ENCODE measurements at regions of chr17 and their contacts with region 1.

Region 1: DNA sequence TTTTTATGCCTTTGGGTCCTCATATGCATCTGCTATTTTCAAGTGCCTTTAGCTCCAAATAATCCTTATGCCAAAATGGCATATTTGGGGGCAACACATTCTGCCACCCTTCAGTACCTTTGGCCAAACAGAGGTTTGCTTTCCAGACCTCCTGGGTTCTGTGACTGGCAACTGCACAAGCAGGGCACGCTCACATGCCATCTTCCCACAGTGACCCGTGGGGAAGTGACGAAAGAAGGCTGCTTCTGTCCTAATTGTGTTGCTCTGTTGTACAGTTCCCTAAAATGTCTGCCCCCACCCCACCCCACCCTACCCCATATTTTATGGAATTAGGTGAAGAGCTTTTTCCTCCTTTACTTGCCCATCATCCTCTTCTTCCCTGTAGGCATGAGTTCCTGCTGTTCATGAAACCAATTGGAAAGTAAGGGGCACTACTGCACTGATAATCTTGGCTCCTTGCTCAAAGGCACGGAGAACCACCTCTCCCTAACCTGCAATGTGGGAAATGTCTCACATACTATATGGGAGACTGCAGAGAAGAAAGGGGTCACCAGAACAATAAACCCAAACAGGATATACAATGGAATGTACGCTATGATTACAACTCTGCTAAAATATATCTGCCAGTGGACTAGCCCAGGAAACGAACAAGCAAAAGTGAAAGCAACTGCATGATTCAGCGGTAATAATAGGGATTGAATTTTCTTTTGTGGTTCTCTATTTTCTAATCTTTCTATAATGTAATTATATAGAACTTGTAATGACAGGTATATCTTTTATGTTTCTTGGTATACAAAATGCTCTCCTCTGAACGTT is 3.3 kb upstream of the SLFN12L start:
- DNase-seq: peak; percentile 51
- ATAC-seq: peak; percentile 78
- H3K4me3 ChIP-seq: peak overlapping the region; percentile 41; the same call in 1 of the 2 replicates
- H3K27ac ChIP-seq: peak overlapping the region; percentile 82; the same call in 1 of the 2 replicates
- H3K4me1 ChIP-seq: no peaks in the 10 kb centered on the region
- H3K27me3 ChIP-seq: no peaks in the 10 kb centered on the region; the same call in 1 of the 2 replicates
- CTCF ChIP-seq: no peak
- POLR2A ChIP-seq: no peak
- RAD21 ChIP-seq: no peak

Region 2: DNA sequence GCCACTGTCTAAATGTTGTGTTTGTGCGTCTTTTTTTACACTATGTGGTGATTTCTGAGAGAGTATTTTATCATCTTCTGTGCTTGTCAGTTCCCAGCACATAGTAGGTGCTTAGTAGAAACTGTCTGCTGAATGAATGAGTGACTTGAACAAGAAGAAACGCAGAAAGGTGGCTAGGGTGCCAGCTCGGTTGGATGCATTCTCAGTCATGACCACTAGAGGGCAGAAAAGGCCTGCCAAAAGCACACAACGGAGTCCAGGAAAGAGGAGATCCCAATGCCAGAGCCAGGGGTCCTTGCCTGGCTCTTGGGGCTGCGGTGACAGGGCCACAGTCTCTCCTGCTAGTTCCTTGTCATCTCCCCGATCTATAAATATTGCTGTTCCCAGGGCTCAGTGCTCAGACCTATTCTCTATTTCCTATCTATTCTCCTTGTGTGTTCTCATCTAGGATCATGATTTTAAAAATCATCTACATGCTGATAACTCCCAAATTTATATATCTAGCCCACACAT is 1120.5 kb before region 1 on chr17:
- CTCF ChIA-PET with region 1: no interaction called
- POLR2A ChIA-PET with region 1: no interaction called
- dilution Hi-C with region 1: no loop called
- in situ Hi-C with region 1: loop called (anchors 25 kb)
- intact Hi-C with region 1: loop called (anchors 2 kb)
- DNase-seq: peak; percentile 46
- ATAC-seq: peak; percentile 95
- H3K4me3 ChIP-seq: no peak overlapping the region
- H3K27ac ChIP-seq: no peak overlapping the region
- H3K4me1 ChIP-seq: no peaks in the 10 kb centered on the region
- H3K27me3 ChIP-seq: peaks cover 27% of the 10 kb centered on the region
- CTCF ChIP-seq: peak; percentile 85
- POLR2A ChIP-seq: no peak
- RAD21 ChIP-seq: peak; percentile 91

Region 3: DNA sequence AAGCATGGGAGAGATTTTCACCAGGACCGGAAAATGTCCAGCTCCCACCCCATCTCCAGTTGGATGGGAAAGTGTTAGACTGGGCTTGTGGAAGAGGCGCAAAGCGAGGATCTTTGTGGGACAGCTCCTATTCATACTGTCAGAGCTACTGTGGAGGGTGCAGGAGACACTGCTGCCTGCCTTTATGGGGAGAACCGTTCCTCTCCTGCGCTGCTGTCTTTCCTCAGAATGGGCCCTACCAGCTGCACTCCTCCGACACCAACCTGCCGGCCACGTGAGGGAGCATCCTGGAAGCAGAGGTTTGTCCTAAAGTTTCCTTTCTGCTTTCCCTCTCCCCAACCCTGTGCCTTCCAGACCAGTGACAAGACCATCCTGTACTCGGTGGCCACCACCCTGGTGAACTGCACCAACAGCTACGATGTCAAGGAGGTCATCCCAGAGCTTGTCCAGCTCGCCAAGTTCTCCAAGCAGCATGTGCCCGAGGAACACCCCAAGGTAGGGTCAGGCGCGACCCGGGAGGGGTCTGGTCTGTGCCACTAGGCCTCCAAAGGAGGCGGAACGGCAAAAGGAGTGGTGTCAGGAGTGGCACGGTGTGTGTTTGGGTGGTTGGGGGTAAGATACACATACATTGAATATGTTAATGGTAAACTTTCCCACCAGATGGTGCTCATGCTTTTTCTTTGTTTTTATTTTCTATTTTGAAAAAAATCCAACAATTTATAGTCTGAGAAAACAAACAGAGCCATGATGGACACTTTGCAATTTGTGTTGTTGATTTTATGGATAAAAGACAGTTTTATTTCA is 369.6 kb before region 1 on chr17:
- CTCF ChIA-PET with region 1: interaction called, 3 read pairs
- POLR2A ChIA-PET with region 1: no interaction called
- dilution Hi-C with region 1: loop called (anchors 25 kb)
- in situ Hi-C with region 1: loop called (anchors 5 kb)
- intact Hi-C with region 1: loop called (anchors 1 kb)
- DNase-seq: peak; percentile 15
- ATAC-seq: peak; percentile 49
- H3K4me3 ChIP-seq: no peak overlapping the region
- H3K27ac ChIP-seq: no peak overlapping the region
- H3K4me1 ChIP-seq: peaks cover 4% of the 10 kb centered on the region; the same call in 1 of the 2 replicates
- H3K27me3 ChIP-seq: peaks cover 3% of the 10 kb centered on the region; the same call in 1 of the 2 replicates
- CTCF ChIP-seq: peak; percentile 50
- POLR2A ChIP-seq: no peak
- RAD21 ChIP-seq: peak; percentile 51

Region 4: GRCh38 chr17:35242805-35243560 is 297.8 kb before region 1 on chr17 and contains the start of gene SLFN5:
- CTCF ChIA-PET with region 1: no interaction called
- POLR2A ChIA-PET with region 1: interaction called, 5 read pairs
- dilution Hi-C with region 1: no loop called
- in situ Hi-C with region 1: no loop called
- intact Hi-C with region 1: loop called (anchors 2 kb)
- DNase-seq: peak; percentile 90
- ATAC-seq: peak; percentile 79
- H3K4me3 ChIP-seq: peak within 1 kb of the TSS; percentile 59
- H3K27ac ChIP-seq: peak within 1 kb of the TSS; percentile 85
- H3K4me1 ChIP-seq: peaks cover 5% of the 10 kb centered on the region
- H3K27me3 ChIP-seq: no peaks in the 10 kb centered on the region
- CTCF ChIP-seq: no peak
- POLR2A ChIP-seq: peak; percentile 99
- RAD21 ChIP-seq: 0 out of 2 replicates have a peak, but pooled peaks have one; percentile 5
- total RNA-seq, gene SLFN5: 48.9 and 64.2 TPM in 2 replicates

Region 5: GRCh38 chr17:35432176-35433074 is 108.4 kb before region 1 on chr17 and contains the start of gene SLFN12:
- CTCF ChIA-PET with region 1: no interaction called
- POLR2A ChIA-PET with region 1: interaction called, 3 read pairs
- dilution Hi-C with region 1: no loop called
- in situ Hi-C with region 1: no loop called
- intact Hi-C with region 1: loop called (anchors 2 kb)
- DNase-seq: peak; percentile 98
- ATAC-seq: peak; percentile 78
- H3K4me3 ChIP-seq: peak within 1 kb of the TSS; percentile 59
- H3K27ac ChIP-seq: peak within 1 kb of the TSS; percentile 92
- H3K4me1 ChIP-seq: peaks cover 1% of the 10 kb centered on the region; the same call in 1 of the 2 replicates
- H3K27me3 ChIP-seq: no peaks in the 10 kb centered on the region
- CTCF ChIP-seq: no peak
- POLR2A ChIP-seq: peak; percentile 83; the same call in 1 of the 2 replicates
- RAD21 ChIP-seq: no peak
- total RNA-seq, gene SLFN12: 38.9 and 48.6 TPM in 2 replicates

Region 6: GRCh38 chr17:35587074-35587971 is 46.5 kb after region 1 on chr17 and contains the start of gene AP2B1:
- CTCF ChIA-PET with region 1: no interaction called
- POLR2A ChIA-PET with region 1: no interaction called
- dilution Hi-C with region 1: no loop called
- in situ Hi-C with region 1: no loop called
- intact Hi-C with region 1: no loop called
- DNase-seq: peak; percentile 96
- ATAC-seq: peak; percentile 85
- H3K4me3 ChIP-seq: peak within 1 kb of the TSS; percentile 66
- H3K27ac ChIP-seq: peak within 1 kb of the TSS; percentile 90
- H3K4me1 ChIP-seq: 0 out of 2 replicates have a peak, but pooled peaks cover 2% of the 10 kb centered on the region
- H3K27me3 ChIP-seq: no peaks in the 10 kb centered on the region
- CTCF ChIP-seq: no peak
- POLR2A ChIP-seq: peak; percentile 87
- RAD21 ChIP-seq: no peak
- total RNA-seq, gene AP2B1: 95.3 and 125 TPM in 2 replicates

Measured in IMR-90 (cell line).